ENCODE measurements at regions of chr2 and their contacts with region 1.

Region 1: DNA sequence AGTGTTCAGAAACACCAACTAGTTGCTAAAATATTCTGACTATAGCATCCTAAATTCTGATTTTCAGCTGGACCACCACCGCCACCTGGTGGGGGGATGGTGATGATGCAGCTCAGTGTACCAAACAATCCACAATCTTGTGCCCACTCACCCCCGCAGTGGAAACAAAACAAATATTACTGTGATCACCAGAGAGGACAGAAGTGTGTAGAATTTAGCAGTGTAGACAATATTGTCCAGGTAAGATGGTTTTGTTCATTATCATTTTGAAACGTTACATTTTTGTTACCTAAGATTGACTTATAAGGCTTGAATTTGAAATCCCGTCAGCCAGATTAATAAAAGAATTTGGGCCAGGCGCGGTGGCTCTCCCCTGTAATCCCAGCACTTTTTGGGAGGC is 31.7 kb upstream of the UBXN4 start:
- DNase-seq: peak; percentile 68
- CTCF ChIP-seq: peak; percentile 88

Region 2: GRCh38 chr2:134988994-134989605 is 720.9 kb before region 1 on chr2:
- CTCF ChIA-PET with region 1: interaction called, 17 read pairs
- POLR2A ChIA-PET with region 1: no interaction called
- DNase-seq: peak; percentile 34
- CTCF ChIP-seq: peak; percentile 49

Region 3: DNA sequence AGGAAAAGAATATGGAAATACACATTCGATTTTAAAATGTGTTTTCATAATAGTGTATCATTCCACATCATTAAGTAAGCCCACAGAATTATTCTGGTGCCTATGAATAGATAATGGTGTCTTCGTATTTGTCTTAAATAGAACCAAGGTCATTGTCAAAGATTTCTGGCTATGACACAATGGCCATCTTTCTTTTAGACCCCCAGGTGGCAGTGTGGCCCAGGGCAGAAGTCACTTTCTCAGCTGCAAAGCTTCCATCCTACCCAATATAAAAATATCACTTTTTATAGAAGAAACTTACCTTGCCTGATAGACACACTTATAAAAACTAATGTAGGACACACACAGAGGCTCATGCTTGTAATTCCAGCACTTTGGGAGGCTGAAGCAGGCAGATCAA is 236.4 kb before region 1 on chr2:
- CTCF ChIA-PET with region 1: interaction called, 71 read pairs
- POLR2A ChIA-PET with region 1: no interaction called
- DNase-seq: peak; percentile 42
- CTCF ChIP-seq: peak; percentile 46

Region 4: DNA sequence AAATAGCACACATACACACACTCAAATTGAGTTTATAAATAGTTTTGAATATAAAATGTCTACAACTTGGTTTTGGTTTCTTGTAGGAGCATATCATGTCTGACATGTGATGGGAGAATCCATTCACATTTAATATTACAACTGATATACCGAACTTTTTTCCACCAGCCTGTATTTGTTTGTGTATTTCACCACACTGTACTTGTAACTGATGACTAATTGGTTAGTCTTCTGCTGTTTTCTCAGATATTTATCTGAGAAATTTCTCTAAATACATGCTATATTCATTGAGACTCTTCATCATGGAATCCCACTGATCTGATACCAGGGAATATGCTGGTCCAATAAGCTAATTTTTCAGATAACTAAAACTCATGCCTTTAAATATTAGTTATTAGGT is 24.6 kb before region 1 on chr2:
- CTCF ChIA-PET with region 1: interaction called, 30 read pairs
- POLR2A ChIA-PET with region 1: no interaction called
- DNase-seq: no peak
- CTCF ChIP-seq: no peak

Region 5: DNA sequence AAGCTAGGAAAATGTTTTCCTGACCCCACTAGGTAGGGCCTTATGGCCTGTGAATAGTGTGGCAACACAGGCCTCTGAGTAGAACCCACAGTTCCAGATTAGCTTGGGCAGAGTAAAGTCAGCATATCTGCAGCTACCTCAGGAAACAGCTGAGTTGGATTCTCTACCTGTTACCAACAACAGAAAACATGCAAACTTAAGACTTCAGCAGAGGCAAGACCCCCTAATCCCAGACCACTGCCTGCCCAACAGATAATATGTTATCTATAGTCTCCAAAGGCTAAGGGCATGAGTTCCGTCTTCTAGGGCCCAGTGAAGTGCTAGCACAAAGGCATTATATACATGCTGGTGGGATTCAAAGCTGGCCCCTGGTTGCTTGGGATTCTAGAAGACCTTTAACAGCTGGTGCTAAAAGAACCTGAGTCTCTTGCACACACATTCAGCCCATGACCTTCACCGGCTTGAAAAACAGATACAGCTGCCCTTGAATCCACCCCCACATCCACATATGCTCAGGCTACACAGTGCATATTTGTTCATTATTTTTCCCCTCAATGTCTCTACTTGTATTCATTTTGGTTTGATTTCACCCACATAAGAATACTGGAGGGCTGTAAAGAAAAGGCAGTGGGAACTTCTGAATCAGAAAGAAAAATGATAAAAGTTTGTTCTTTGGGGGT is 18.2 kb after region 1 on chr2:
- CTCF ChIA-PET with region 1: interaction called, 14 read pairs
- POLR2A ChIA-PET with region 1: no interaction called
- DNase-seq: no peak
- CTCF ChIP-seq: no peak